Caco-2 (cell line): ENCODE measurements at regions of chr6 and their contacts with region 1.

Region 1: DNA sequence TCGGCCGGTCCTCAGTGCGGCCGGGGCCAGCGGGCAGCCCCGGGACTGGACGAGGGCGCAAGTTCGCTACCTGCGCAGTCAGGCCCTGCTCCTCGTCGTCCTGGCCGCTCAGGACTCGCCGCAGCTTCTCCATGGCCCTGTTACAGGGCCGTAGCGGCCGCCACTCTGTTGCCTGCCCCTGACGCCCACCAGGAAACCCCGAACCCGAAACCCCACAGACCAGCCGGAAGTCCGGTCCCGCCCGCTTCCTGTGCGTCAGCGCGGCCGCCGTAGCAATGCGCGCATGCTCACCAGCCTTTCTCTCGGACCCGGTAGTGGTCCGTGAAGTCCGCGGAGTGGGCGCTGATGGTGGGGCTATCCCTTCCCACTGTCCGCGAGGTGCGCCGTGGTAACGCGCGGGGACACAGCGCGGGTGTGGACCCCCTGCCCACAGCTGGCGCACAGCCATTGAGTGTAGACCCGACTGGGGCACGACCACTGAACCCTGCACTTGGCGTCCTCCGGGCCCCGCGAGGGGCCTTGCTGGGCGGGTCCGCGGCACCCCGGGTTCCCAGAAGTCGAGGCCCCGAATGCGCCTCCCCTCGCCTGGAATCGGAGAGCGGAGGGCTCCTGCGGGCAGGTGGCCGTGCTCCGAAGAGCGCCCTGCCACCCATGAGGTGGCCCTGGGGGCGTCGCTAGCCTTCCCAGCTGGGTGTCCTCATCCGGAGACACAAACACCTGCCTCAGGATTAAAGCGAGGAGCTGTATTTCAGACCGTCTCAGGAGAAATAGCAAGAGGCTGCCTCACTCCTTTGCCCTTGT is at the start of gene SFT2D1:
- DNase-seq: peak; percentile 76 to 82
- H3K4me3 ChIP-seq: peak within 1 kb of the TSS; percentile 99
- H3K4me3 Mint-ChIP-seq: peak within 1 kb of the TSS; percentile 88
- H3K27ac Mint-ChIP-seq: peak within 1 kb of the TSS; percentile 83
- H3K4me1 ChIP-seq: peaks cover 17% of the 10 kb centered on the region
- H3K4me1 Mint-ChIP-seq: peaks cover 6% of the 10 kb centered on the region
- H3K27me3 ChIP-seq: no peaks in the 10 kb centered on the region
- H3K27me3 Mint-ChIP-seq: no peaks in the 10 kb centered on the region
- CTCF ChIP-seq: peak in 1 of 2 experiments; percentile 3
- total RNA-seq, gene SFT2D1: 44.3 and 48.1 TPM in 2 replicates

Region 2: DNA sequence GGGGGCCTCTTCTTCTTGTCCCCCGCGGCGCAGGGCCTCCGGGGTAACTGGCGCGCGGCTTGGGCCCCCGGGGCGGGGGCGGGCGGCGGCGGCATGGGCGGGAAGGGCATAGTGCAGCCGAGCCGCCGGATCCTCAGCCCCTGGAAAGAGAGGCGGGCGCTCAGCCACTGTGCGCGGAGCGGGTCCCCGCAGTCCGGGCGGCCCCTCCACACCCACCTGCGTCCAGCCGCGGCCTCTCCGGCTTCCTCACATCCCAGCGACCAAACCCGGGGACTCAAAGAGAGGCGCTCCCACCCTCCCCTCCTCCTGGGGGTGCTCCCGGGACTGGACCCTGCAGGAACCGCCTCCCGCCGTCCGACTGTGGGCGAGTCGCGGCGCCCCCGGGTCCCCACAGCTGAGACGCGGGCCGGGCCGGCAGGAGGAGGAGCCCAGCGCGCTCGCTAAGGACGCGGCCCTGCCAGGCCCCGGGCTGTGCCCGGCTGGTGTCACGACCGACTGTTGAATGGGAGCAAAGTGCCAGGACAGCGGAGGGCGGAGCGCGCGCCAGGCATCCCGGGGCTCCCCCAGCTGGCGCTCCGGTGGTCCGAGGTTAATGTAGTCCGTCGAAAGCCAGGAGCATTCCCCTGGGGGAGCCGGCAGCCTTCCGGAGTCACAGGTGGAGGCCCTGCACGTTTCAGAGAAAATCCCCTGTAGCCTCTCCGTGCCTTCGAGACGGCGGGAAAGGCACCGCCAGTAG is 34.3 kb before region 1 on chr6 and contains the start of gene PRR18:
- CTCF ChIA-PET with region 1: no interaction called
- POLR2A ChIA-PET with region 1: no interaction called
- intact Hi-C with region 1: loop called (anchors 2 kb)
- DNase-seq: peak in 1 of 2 experiments; percentile 48
- H3K4me3 ChIP-seq: peak within 1 kb of the TSS; percentile 62
- H3K4me3 Mint-ChIP-seq: peak within 1 kb of the TSS; percentile 52
- H3K27ac Mint-ChIP-seq: no peak within 1 kb of the TSS
- H3K4me1 ChIP-seq: 0 out of 2 replicates have a peak, but pooled peaks cover 3% of the 10 kb centered on the region
- H3K4me1 Mint-ChIP-seq: no peaks in the 10 kb centered on the region
- H3K27me3 ChIP-seq: no peaks in the 10 kb centered on the region
- H3K27me3 Mint-ChIP-seq: no peaks in the 10 kb centered on the region
- CTCF ChIP-seq: no peak
- total RNA-seq, gene PRR18: 0.77 and 0.95 TPM in 2 replicates